GM12878 (cell line): ENCODE measurements at regions of chr17 and their contacts with region 1.

Region 1: DNA sequence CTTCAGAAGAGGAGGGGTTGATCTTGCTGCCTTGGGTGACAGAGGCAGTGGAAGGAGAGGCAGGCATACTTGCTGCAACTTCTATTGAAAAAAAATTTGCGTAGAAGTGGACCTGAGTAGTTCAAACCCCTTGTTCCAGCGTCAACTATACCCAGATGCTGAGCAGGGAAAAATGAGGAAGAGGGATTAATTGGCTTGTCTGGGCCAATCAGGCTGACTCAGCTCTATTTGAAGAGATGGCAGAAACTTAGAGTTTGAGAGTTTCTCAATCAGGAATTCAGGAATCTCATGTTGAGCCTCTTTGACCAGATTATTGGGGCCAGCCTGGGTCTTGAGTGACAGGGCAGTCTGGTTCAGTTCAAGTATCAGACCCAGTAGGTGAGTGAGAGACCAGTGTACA is 17.6 kb downstream of the CASC3 start:
- DNase-seq: no peak
- ATAC-seq: no peak
- H3K4me3 ChIP-seq: no peak overlapping the region
- H3K27ac ChIP-seq: 0 out of 2 replicates have a peak overlapping the region, but pooled peaks have one; percentile 19
- H3K4me1 ChIP-seq: peaks cover 12% of the 10 kb centered on the region
- H3K27me3 ChIP-seq: no peaks in the 10 kb centered on the region
- CTCF ChIP-seq: no peak
- EP300 ChIP-seq: no peak
- POLR2A ChIP-seq: no peak
- RAD21 ChIP-seq: no peak

Region 2: GRCh38 chr17:40139566-40140058 is 18.4 kb before region 1 on chr17:
- CTCF ChIA-PET with region 1: no interaction called
- POLR2A ChIA-PET with region 1: interaction called, 22 read pairs
- RAD21 ChIA-PET with region 1: no interaction called
- SMC1A ChIA-PET with region 1: interaction called, 5 read pairs
- in situ Hi-C with region 1: no loop called
- intact Hi-C with region 1: no loop called
- DNase-seq: no peak
- ATAC-seq: peak; percentile 20
- H3K4me3 ChIP-seq: peak overlapping the region; percentile 76
- H3K27ac ChIP-seq: peak overlapping the region; percentile 97
- H3K4me1 ChIP-seq: peaks cover 2% of the 10 kb centered on the region; the same call in 1 of the 2 replicates
- H3K27me3 ChIP-seq: no peaks in the 10 kb centered on the region
- CTCF ChIP-seq: no peak
- EP300 ChIP-seq: no peak
- POLR2A ChIP-seq: no peak
- RAD21 ChIP-seq: no peak